SK-N-SH (cell line): ENCODE measurements at regions of chr4 and their contacts with region 1.

Region 1: DNA sequence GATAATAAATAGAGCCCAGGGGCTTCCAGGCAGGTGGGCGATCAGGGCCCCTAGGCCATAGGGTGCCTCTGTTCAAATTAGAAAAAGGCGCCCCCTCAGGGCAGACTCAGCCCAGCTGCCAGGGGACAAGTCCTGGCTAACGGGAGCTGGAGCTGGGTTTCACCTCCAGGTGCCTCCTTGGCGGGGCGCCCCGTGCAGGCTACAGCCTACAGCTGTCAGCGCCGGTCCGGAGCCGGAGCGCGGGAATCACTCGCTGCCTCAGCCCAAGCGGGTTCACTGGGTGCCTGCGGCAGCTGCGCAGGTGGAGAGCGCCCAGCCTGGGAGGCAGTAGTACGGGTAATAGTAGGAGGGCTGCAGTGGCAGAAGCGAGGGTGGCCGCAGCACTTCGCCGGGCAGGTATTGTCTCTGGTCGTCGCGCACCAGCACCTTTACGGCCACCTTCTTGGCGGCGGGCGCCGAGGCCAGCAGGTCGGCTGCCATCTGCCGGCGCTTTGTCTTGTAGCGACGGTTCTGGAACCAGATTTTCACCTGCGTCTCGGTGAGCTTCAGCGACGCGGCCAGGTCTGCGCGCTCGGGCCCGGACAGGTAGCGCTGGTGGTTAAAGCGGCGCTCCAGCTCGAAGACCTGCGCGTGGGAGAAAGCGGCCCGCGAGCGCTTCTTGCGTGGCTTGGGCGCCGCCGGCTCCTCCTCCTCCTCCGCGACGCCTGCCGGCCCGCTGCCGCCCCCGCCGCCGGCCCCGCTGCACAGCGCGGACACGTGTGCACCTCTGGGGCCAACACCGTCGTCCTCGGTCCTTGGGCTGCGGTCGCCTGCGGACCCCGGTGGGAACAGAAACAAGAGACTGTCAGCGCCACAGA is 2.4 kb downstream of the NKX3-2 start:
- DNase-seq: peak; percentile 58
- H3K4me3 ChIP-seq: no peak overlapping the region
- H3K27ac ChIP-seq: no peak overlapping the region
- H3K4me1 ChIP-seq: peaks cover 5 to 8% of the 10 kb centered on the region in 2 experiments; a peak in 2 of 4 replicates
- H3K27me3 ChIP-seq: peaks cover 83% of the 10 kb centered on the region
- CTCF ChIP-seq: peak; percentile 52; the same call in 1 of the 2 replicates
- EP300 ChIP-seq: no peak
- RAD21 ChIP-seq: peak; percentile 41

Region 2: DNA sequence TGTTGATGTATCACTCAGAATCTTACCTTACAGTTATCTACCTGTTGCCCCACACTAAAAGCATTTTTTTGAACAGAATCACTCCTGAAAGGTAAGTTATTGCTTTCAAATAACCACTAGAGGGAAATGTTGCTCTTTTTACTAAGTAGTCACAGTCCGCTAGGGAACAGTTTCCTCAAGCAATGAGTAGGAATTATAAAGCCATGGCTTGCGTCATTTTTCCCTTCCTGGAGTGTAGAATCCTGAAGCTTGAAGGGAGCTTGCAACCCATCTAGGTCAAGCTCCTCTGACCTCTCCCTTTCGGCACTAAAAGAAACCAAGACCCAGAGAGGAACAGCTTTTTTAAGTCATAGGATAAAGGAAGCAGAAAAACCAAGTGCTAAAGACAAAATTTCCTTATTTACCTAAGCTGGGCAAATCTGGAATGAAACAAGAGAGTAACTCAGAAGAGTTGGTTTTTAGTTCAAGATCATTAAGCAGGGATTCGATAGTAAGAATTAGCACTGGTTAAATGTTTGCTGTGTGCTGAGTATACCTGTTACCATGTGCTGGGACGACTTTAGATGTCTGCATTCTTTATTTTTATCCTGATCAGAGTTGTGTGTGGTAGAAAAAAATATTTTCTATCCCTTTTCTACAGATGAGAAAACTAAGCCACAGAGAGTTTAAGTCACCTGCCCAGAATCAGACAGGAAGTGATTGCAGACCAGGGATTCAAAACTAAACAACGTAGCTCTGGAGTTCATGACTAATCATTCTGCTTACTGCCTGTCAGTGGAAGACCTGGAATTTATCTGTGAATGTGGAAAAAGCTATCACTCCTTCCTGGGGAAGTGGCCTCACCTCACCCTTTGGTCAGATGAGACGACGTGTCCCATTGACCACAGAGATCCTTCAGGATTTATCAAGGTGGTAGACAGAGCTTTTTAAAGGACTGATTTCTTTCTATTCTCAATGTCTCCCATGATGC is 689.3 kb before region 1 on chr4:
- CTCF ChIA-PET with region 1: interaction called, 38 read pairs
- POLR2A ChIA-PET with region 1: no interaction called
- DNase-seq: peak; percentile 32
- H3K4me3 ChIP-seq: no peak overlapping the region
- H3K27ac ChIP-seq: no peak overlapping the region
- H3K4me1 ChIP-seq: no peaks in the 10 kb centered on the region
- H3K27me3 ChIP-seq: no peaks in the 10 kb centered on the region
- CTCF ChIP-seq: peak; percentile 67
- EP300 ChIP-seq: no peak
- RAD21 ChIP-seq: peak; percentile 81